ENCODE measurements at regions of chr10 and their contacts with region 1.

Region 1: GRCh38 chr10:114304017-114304570 is 65.0 kb downstream of the VWA2 start:
- DNase-seq: peak; percentile 85
- H3K4me3 ChIP-seq: peak overlapping the region; percentile 26 to 84 (median 49)
- H3K27ac ChIP-seq: peak overlapping the region; percentile 2 to 83 (median 56)
- H3K4me1 ChIP-seq: peaks cover 5 to 46% (median 15%) of the 10 kb centered on the region in 6 donors
- H3K27me3 ChIP-seq: no peaks in the 10 kb centered on the region
- CTCF ChIP-seq: peak; percentile 68 to 90 (median 82)
- POLR2A ChIP-seq: no peak

Region 2: GRCh38 chr10:114228156-114228555 is 75.9 kb before region 1 on chr10:
- intact Hi-C with region 1: no loop called
- DNase-seq: no peak
- H3K4me3 ChIP-seq: no peak overlapping the region
- H3K27ac ChIP-seq: no peak overlapping the region
- H3K4me1 ChIP-seq: no peaks in the 10 kb centered on the region
- H3K27me3 ChIP-seq: peaks cover 0 to 7% (median 0%) of the 10 kb centered on the region in 7 donors
- CTCF ChIP-seq: no peak
- POLR2A ChIP-seq: no peak

Region 3: DNA sequence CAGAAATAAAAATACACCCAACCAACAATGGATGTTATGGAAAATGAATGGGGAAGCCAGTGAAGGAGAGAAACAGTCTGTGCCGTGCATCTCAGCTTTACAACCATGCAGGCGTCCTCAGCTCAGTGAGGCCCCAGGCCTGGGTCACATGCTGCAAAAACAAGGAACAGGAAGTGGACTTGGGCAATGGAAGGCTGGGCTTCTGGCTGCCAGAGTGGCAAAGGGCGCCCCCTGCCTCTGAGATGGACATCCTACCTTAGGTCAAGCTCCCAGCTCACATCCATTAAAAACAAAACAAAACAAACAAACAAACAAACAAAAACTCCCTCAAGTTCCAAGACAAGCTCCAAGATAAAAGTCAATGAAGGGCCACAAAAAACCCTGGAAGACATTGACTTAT is 154.9 kb after region 1 on chr10:
- intact Hi-C with region 1: loop called (anchors 10 kb)
- DNase-seq: peak; percentile 78
- H3K4me3 ChIP-seq: no peak overlapping the region
- H3K27ac ChIP-seq: no peak overlapping the region
- H3K4me1 ChIP-seq: peaks cover 0 to 5% (median 0%) of the 10 kb centered on the region in 6 donors
- H3K27me3 ChIP-seq: no peaks in the 10 kb centered on the region
- CTCF ChIP-seq: peak in 9 of 11 experiments; percentile 21 to 68 (median 43)
- POLR2A ChIP-seq: no peak

Region 4: DNA sequence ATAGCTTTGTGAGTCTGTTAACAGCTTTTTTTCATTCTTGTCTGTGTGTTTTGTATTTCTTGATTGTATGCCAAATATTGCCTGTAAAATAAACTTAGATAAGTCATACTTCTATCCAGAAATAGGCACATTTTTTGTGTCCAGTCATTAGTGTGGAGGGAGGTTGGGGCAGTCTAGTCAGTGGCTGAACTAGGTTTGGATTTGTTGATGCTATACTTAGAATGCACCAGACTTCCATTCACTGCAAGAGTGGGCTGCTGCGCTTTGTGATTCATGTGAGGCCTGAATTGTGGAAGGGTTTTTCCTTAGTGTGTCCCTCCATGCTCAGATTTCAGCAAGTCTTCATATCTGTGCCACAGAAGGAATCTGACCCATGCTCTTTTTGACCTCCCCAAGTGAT is 683.9 kb after region 1 on chr10:
- intact Hi-C with region 1: no loop called
- DNase-seq: no peak
- H3K4me3 ChIP-seq: no peak overlapping the region
- H3K27ac ChIP-seq: no peak overlapping the region
- H3K4me1 ChIP-seq: no peaks in the 10 kb centered on the region
- H3K27me3 ChIP-seq: no peaks in the 10 kb centered on the region
- CTCF ChIP-seq: no peak
- POLR2A ChIP-seq: no peak